ENCODE measurements at regions of chr10 and their contacts with region 1.

Region 1: GRCh38 chr10:35126530-35127296 is at the start of gene CREM:
- DNase-seq: peak; percentile 100
- H3K4me3 ChIP-seq: peak within 1 kb of the TSS; percentile 76 to 95 (median 84)
- H3K27ac ChIP-seq: peak within 1 kb of the TSS; percentile 97 to 100 (median 100)
- H3K4me1 ChIP-seq: peaks cover 14 to 42% (median 36%) of the 10 kb centered on the region in 4 donors
- H3K27me3 ChIP-seq: no peaks in the 10 kb centered on the region
- CTCF ChIP-seq: peak; percentile 86 to 97 (median 86)
- EP300 ChIP-seq: peak; percentile 92
- POLR2A ChIP-seq: peak; percentile 94
- total RNA-seq, gene CREM: 25.7 to 65.9 (median 29.5) TPM

Region 2: GRCh38 chr10:35195361-35196306 is 68.9 kb after region 1 on chr10:
- intact Hi-C with region 1: loop called (anchors 1 kb)
- DNase-seq: no peak
- H3K4me3 ChIP-seq: peak overlapping the region; percentile 45 to 57 (median 56)
- H3K27ac ChIP-seq: peak overlapping the region; percentile 88 to 94 (median 90)
- H3K4me1 ChIP-seq: peaks cover 11 to 12% (median 11%) of the 10 kb centered on the region in 4 donors
- H3K27me3 ChIP-seq: no peaks in the 10 kb centered on the region
- CTCF ChIP-seq: peak; percentile 89 to 94 (median 91)
- EP300 ChIP-seq: peak; percentile 65
- POLR2A ChIP-seq: no peak

Region 3: GRCh38 chr10:35218339-35218955 is 91.7 kb after region 1 on chr10:
- intact Hi-C with region 1: loop called (anchors 2 kb)
- DNase-seq: peak; percentile 95
- H3K4me3 ChIP-seq: no peak overlapping the region
- H3K27ac ChIP-seq: peak overlapping the region in 1 of 4 donors; percentile 53
- H3K4me1 ChIP-seq: peaks cover 9 to 24% (median 10%) of the 10 kb centered on the region in 4 donors
- H3K27me3 ChIP-seq: no peaks in the 10 kb centered on the region
- CTCF ChIP-seq: peak; percentile 76 to 83 (median 79)
- EP300 ChIP-seq: no peak
- POLR2A ChIP-seq: no peak

Measured in esophagus muscularis mucosa (tissue), 4 donors.